A673 (cell line): ENCODE measurements at regions of chr19 and their contacts with region 1.

Region 1: DNA sequence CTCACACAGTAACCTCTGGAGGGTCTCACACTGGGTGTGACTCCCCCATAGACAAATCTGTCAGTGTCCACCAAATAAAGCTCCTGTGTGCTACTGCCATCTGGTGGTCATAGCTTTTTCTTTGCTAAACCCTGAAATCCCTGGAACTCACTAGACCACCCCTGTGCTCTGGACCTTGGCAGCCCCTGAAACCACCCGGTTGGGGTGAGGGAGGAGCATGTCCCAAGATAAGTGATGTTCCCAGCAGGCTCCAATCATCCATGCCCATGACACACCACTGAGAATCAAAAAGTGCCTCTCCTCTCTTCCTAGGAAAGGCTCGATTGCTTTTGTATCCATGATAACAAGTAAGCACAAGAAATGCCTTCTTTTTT is 6.5 kb upstream of the HSD17B14 start:
- DNase-seq: peak; percentile 70
- H3K4me3 ChIP-seq: no peak overlapping the region
- H3K27ac ChIP-seq: no peak overlapping the region
- H3K4me1 ChIP-seq: no peaks in the 10 kb centered on the region
- H3K27me3 ChIP-seq: no peaks in the 10 kb centered on the region
- CTCF ChIP-seq: peak; percentile 90

Region 2: GRCh38 chr19:48553676-48554386 is 288.9 kb before region 1 on chr19:
- CTCF ChIA-PET with region 1: no interaction called
- POLR2A ChIA-PET with region 1: no interaction called
- intact Hi-C with region 1: no loop called
- DNase-seq: no peak
- H3K4me3 ChIP-seq: no peak overlapping the region
- H3K27ac ChIP-seq: no peak overlapping the region
- H3K4me1 ChIP-seq: no peaks in the 10 kb centered on the region
- H3K27me3 ChIP-seq: no peaks in the 10 kb centered on the region
- CTCF ChIP-seq: no peak

Region 3: GRCh38 chr19:48746738-48747575 is 95.8 kb before region 1 on chr19 and contains the start of gene IZUMO1:
- CTCF ChIA-PET with region 1: no interaction called
- POLR2A ChIA-PET with region 1: interaction called, 20 read pairs
- intact Hi-C with region 1: no loop called
- DNase-seq: peak; percentile 95
- H3K4me3 ChIP-seq: peak within 1 kb of the TSS; percentile 60
- H3K27ac ChIP-seq: peak within 1 kb of the TSS; percentile 82
- H3K4me1 ChIP-seq: peaks cover 5% of the 10 kb centered on the region
- H3K27me3 ChIP-seq: no peaks in the 10 kb centered on the region
- CTCF ChIP-seq: no peak
- total RNA-seq, gene IZUMO1: not detected in 2 replicates

Region 4: DNA sequence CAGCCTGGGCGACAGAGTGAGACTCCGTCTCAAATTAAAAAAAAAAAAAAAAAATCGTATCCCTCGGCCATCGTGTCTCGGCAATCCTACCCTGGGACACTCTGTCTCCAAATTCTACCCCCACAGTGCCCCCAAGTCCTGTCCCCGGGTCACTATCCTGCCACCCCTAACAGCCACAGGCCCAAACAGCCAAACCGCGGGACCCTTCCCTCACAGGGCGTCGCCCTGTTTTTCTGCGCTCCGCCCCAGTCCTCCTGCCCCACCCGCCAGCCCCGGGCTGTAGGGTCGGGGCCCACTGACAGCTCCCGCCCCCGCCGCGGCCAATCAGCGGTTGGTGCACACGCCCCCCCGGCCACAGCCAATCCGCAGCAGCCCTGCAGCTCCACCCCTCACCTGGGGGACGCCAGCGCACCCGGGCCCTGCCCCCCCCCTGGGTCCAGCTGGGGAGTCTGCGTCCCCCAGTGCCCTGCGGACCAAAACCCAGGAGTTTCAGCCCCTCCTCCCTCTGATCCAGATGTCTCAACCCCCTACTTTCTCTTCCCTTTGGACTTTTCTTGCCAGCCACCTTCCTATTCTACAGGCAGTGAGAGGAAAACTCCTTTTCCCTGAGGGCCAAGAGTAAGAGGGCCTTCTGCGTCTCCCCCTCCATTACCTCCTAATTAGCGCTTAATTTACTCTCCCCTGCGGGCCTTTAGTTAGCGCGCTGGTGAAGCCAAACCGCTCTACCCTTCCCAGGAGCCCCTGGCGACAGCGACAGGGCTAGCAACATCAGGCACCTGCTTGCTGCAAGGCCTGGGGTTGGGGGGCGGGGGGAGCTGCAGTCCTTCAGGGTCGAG is 30.5 kb before region 1 on chr19:
- CTCF ChIA-PET with region 1: no interaction called
- POLR2A ChIA-PET with region 1: no interaction called
- intact Hi-C with region 1: no loop called
- DNase-seq: peak; percentile 83
- H3K4me3 ChIP-seq: peak overlapping the region; percentile 33
- H3K27ac ChIP-seq: peak overlapping the region; percentile 74
- H3K4me1 ChIP-seq: peaks cover 17% of the 10 kb centered on the region
- H3K27me3 ChIP-seq: no peaks in the 10 kb centered on the region
- CTCF ChIP-seq: 0 out of 2 replicates have a peak, but pooled peaks have one; percentile 9

Region 5: DNA sequence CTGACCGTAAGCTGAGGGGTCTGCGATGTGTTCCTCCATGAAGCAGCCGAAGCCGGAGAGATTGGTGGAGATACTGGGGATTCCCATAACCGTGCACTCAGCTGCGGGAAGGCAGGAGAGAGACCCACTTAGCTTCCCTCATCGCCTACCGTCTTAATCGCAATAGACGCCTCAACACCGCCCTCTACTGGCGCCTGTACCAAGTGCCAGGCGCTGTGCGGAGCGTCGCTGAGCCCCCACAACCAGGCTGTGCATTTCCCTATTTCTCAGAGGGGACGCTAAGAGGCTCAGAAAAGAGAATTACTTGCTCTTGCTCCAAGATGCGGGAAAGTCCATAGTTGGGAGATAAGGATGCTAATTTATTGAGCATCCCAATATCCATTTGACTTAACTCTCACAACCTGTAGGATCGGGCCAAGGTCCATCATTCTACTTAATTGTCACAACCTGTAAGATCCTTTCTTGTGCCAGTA is 128.2 kb after region 1 on chr19:
- CTCF ChIA-PET with region 1: interaction called, 14 read pairs
- POLR2A ChIA-PET with region 1: no interaction called
- intact Hi-C with region 1: no loop called
- DNase-seq: peak; percentile 92
- H3K4me3 ChIP-seq: no peak overlapping the region
- H3K27ac ChIP-seq: no peak overlapping the region
- H3K4me1 ChIP-seq: peaks cover 29% of the 10 kb centered on the region
- H3K27me3 ChIP-seq: no peaks in the 10 kb centered on the region
- CTCF ChIP-seq: peak; percentile 96